Transverse colon (tissue), 4 donors: ENCODE measurements at regions of chr12 and their contacts with region 1.

Region 1: GRCh38 chr12:54571193-54572188 is 17.0 kb downstream of the PPP1R1A start:
- DNase-seq: no peak
- H3K4me3 ChIP-seq: no peak overlapping the region
- H3K27ac ChIP-seq: no peak overlapping the region
- H3K4me1 ChIP-seq: no peaks in the 10 kb centered on the region
- H3K27me3 ChIP-seq: no peaks in the 10 kb centered on the region
- CTCF ChIP-seq: no peak
- EP300 ChIP-seq: no peak
- POLR2A ChIP-seq: no peak

Region 2: GRCh38 chr12:54512506-54512905 is 59.0 kb before region 1 on chr12:
- in situ Hi-C with region 1: no loop called
- intact Hi-C with region 1: no loop called
- DNase-seq: no peak
- H3K4me3 ChIP-seq: no peak overlapping the region
- H3K27ac ChIP-seq: no peak overlapping the region
- H3K4me1 ChIP-seq: no peaks in the 10 kb centered on the region
- H3K27me3 ChIP-seq: no peaks in the 10 kb centered on the region
- CTCF ChIP-seq: no peak
- EP300 ChIP-seq: no peak
- POLR2A ChIP-seq: no peak

Region 3: GRCh38 chr12:54526812-54527630 is 44.5 kb before region 1 on chr12:
- in situ Hi-C with region 1: no loop called
- intact Hi-C with region 1: loop called (anchors 5 kb)
- DNase-seq: peak; percentile 25
- H3K4me3 ChIP-seq: no peak overlapping the region
- H3K27ac ChIP-seq: no peak overlapping the region
- H3K4me1 ChIP-seq: no peaks in the 10 kb centered on the region
- H3K27me3 ChIP-seq: no peaks in the 10 kb centered on the region
- CTCF ChIP-seq: peak; percentile 14 to 44 (median 37)
- EP300 ChIP-seq: no peak
- POLR2A ChIP-seq: no peak

Region 4: DNA sequence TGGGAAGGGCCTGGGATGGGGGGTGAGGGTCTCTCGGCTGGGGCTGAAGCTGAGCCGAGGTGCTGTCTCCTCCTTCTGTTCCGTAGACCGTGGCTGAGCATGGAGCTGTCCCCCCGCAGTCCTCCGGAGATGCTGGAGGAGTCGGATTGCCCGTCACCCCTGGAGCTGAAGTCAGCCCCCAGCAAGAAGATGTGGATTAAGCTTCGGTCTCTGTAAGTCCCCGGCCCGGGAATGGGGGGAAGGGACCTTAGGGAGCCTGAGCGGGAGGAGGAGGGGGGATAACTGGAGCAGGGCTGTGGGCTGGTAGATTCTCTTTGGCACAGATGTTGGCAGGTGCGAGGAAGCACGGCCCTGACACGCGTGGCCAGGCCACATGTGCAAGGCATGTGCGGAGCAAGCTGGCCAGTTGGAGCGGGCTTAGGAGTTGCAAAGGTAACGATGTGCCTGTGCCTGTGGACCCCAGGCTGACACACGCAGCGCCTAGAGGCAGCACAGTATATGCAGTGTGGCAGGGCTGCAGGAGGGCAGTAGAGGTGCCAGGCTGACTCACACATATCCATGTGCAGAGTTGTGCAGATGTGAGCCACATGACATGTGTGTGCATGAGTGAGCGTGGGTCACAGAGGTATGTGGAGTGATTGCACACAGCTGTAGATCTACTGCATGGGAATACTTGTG is 21.6 kb before region 1 on chr12:
- in situ Hi-C with region 1: no loop called
- intact Hi-C with region 1: no loop called
- DNase-seq: no peak
- H3K4me3 ChIP-seq: peak overlapping the region; percentile 5 to 48 (median 24)
- H3K27ac ChIP-seq: peak overlapping the region in 2 of 4 donors; percentile 16 to 28
- H3K4me1 ChIP-seq: peaks cover 0 to 12% (median 8%) of the 10 kb centered on the region in 4 donors
- H3K27me3 ChIP-seq: peaks cover 31% of the 10 kb centered on the region
- CTCF ChIP-seq: no peak
- EP300 ChIP-seq: no peak
- POLR2A ChIP-seq: no peak